Endothelial cell of umbilical vein (primary cell): ENCODE measurements at regions of chr10 and their contacts with region 1.

Region 1: DNA sequence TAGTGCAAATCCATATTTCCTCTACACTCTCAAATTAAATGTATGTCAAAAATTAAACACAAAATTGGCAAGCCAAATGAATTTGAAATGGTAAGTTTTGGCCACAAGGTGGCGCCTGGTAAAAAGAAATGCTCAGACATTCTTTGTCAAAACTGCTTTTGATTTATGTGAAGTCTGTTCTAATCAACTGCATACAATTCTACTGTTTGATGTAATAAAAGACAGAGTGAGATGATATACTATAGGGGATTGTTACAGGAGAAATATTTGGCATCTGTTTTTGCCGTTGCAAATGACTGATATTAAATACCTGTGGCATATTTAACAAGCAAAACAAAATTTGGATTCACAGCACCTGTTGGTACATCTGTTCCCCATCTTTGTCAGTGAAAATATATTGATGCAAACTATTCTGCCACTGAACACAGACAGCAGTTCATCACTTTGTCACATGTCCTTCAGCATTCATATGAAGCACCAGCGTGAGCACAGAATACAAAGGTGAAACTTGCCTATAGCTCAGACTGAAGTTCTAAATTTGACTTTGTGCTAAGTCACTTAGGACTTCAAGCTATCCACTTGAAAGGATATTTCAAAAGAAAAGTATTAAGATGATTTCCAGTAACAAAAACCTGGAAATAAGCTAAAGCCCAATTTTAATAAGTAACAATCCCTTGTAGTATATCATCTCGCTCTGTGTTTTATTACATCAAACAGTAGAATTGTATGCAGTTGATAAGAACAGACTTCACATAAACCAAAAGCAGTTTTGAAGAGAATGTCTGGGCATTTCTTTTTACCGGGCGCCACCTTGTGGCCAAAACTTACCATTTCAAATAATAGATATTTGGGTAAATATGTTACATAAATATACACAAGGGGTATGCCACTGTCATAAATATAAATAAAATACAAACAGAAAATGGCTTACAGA is 10.2 kb upstream of the CH25H start:
- DNase-seq: peak; percentile 80
- H3K4me3 ChIP-seq: no peak overlapping the region
- H3K27ac ChIP-seq: no peak overlapping the region
- H3K4me1 ChIP-seq: peaks cover 9% of the 10 kb centered on the region
- H3K27me3 ChIP-seq: no peaks in the 10 kb centered on the region
- CTCF ChIP-seq: peak; percentile 47 to 51
- POLR2A ChIP-seq: no peak

Region 2: GRCh38 chr10:88835096-88835909 is 382.0 kb before region 1 on chr10:
- CTCF ChIA-PET with region 1: interaction called, 41 read pairs
- POLR2A ChIA-PET with region 1: no interaction called
- dilution Hi-C with region 1: no loop called
- intact Hi-C with region 1: loop called (anchors 1 kb)
- DNase-seq: peak; percentile 85
- H3K4me3 ChIP-seq: no peak overlapping the region
- H3K27ac ChIP-seq: no peak overlapping the region
- H3K4me1 ChIP-seq: no peaks in the 10 kb centered on the region
- H3K27me3 ChIP-seq: peaks cover 0 to 2% of the 10 kb centered on the region in 2 experiments
- CTCF ChIP-seq: peak; percentile 83 to 88
- POLR2A ChIP-seq: no peak

Region 3: DNA sequence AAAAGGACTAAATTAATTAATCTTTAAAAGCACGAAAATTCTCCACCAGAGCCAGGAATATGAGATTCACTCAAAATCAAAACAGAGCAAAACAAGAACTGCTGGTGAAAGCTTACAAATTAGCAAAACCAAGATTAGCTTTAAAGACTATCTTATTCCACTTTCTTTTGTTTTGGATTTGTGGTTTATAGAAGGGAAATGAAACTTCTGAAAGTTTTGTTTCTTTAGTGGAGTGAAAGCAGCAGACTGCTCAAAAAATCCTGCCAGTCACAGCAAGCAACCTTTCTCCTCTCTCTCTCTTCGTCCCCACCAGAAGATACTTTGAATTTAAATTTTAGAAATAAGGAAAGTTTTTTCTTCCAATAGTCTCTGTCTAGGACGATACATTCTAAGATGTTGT is 272.5 kb before region 1 on chr10:
- CTCF ChIA-PET with region 1: interaction called, 17 read pairs
- POLR2A ChIA-PET with region 1: no interaction called
- dilution Hi-C with region 1: no loop called
- intact Hi-C with region 1: no loop called
- DNase-seq: no peak
- H3K4me3 ChIP-seq: no peak overlapping the region
- H3K27ac ChIP-seq: no peak overlapping the region
- H3K4me1 ChIP-seq: no peaks in the 10 kb centered on the region
- H3K27me3 ChIP-seq: peaks cover 0 to 4% of the 10 kb centered on the region in 2 experiments
- CTCF ChIP-seq: no peak
- POLR2A ChIP-seq: no peak

Region 4: DNA sequence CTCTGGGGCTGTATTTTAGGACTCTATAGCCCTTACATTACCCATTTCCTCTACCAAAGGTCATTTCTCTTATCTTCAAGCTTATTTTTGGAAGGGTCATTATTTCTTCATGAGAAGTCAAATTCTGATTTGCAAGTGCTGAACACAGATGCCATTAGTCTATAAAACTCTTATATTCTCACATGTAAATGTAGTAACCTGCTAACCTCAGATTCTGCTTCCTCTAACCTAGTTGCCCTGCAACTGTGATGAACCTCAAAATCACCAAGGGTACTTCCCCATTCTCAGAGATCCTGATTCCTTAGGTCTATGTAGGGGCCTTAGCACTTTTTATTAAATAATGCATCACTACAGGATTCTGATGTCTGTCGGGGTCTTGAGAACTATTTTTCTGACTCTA is 220.4 kb before region 1 on chr10:
- CTCF ChIA-PET with region 1: interaction called, 14 read pairs
- POLR2A ChIA-PET with region 1: no interaction called
- dilution Hi-C with region 1: loop called (anchors 25 kb)
- intact Hi-C with region 1: no loop called
- DNase-seq: no peak
- H3K4me3 ChIP-seq: no peak overlapping the region
- H3K27ac ChIP-seq: no peak overlapping the region
- H3K4me1 ChIP-seq: peaks cover 3% of the 10 kb centered on the region
- H3K27me3 ChIP-seq: peaks cover 6 to 12% of the 10 kb centered on the region in 2 experiments
- CTCF ChIP-seq: no peak
- POLR2A ChIP-seq: no peak

Region 5: DNA sequence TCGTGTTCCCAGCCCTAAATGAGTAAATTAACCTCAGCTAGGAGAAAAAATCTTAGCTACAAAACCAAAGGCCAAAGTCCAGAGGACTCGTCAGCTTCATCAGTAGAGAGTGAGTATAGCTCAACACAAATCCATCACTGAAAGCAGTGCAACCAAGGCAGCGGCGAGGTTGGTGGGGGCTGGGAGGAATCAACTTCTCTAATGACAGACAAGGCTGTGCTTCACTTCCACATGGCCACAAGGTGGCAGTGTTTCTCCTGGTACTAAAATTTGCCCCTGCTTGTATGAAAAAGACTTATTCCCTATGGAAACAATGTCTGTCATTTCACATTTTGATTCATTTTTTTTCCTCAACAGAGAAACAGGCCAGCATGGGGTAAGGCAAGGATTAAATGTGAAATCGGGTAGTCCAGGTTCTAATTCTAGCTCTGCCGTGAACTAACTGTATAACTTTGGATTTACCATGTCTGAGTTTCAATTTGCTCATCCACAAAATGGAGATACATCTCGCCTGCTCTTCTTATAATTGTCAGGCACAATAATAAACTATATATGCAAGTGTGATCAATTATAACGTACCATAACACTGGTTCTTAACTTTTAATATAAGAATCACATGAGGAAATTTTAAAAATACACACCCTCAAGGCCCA is 187.4 kb before region 1 on chr10:
- CTCF ChIA-PET with region 1: interaction called, 74 read pairs
- POLR2A ChIA-PET with region 1: no interaction called
- dilution Hi-C with region 1: no loop called
- intact Hi-C with region 1: loop called (anchors 1 kb)
- DNase-seq: peak; percentile 79
- H3K4me3 ChIP-seq: no peak overlapping the region
- H3K27ac ChIP-seq: no peak overlapping the region
- H3K4me1 ChIP-seq: peaks cover 19% of the 10 kb centered on the region
- H3K27me3 ChIP-seq: peaks cover 0 to 2% of the 10 kb centered on the region in 2 experiments
- CTCF ChIP-seq: peak; percentile 66 to 84
- POLR2A ChIP-seq: no peak

Region 6: DNA sequence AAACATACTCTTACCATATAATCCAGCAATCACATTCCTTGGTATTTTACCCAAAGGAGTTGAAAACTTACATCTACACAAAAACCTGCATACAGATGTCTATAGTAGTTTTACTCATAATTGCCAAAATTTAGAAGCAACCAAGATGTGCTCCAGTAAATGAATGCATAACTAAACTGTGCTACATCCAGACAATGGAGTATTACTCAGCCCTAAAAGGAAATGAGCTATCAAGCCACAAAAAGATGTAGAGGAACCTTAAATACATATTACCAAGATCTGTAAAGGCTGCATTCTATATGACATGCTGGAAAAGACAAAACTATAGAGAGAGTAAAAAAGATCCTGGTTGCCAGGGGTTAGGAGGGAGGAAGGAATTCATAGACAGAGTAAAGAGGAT is 11.6 kb after region 1 on chr10:
- CTCF ChIA-PET with region 1: interaction called, 15 read pairs
- POLR2A ChIA-PET with region 1: no interaction called
- dilution Hi-C with region 1: no loop called
- intact Hi-C with region 1: no loop called
- DNase-seq: no peak
- H3K4me3 ChIP-seq: no peak overlapping the region
- H3K27ac ChIP-seq: no peak overlapping the region
- H3K4me1 ChIP-seq: peaks cover 10% of the 10 kb centered on the region
- H3K27me3 ChIP-seq: no peaks in the 10 kb centered on the region
- CTCF ChIP-seq: no peak
- POLR2A ChIP-seq: no peak

Region 7: DNA sequence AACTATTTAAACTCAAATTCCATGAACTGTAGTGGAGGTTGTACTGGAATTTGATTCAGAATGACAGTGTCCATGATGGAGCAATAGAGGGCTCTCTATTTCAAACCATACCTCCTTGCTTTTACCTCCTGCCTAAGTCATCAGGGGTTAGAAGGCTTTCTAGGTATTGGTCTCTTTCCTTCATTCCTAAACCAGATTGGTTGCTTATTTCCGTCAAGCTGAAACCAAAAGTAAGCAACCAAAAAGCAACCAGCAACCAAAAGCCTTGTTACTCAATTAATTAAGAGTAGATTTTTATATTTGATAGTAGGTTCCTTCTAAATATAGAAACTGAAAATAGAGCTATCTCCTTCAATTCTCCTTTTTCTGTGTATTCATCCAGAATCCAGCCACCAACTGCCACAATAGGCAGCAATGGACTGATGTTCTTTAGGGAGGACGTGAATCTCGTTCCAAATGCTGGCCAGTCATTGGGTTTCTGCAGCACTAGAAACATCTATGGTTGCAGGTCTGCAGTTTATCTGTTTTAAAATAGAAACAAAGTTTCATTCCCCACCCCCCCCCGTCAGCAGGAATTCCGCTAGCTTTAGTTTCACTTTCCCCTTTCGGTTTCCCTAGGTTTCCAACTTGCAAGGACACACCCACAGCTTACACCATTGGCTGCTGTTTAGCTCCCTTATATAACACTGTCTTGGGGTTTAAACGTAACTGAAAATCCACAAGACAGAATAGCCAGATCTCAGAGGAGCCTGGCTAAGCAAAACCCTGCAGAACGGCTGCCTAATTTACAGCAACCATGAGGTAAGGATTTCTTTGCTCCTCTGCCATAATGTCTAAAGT is 174.8 kb after region 1 on chr10 and contains the start of gene IFIT1:
- CTCF ChIA-PET with region 1: interaction called, 8 read pairs
- POLR2A ChIA-PET with region 1: no interaction called
- dilution Hi-C with region 1: no loop called
- intact Hi-C with region 1: loop called (anchors 1 kb)
- DNase-seq: peak; percentile 76
- H3K4me3 ChIP-seq: peak within 1 kb of the TSS; percentile 52 to 100 (median 98)
- H3K27ac ChIP-seq: peak within 1 kb of the TSS; percentile 63
- H3K4me1 ChIP-seq: peaks cover 10% of the 10 kb centered on the region
- H3K27me3 ChIP-seq: no peaks in the 10 kb centered on the region
- CTCF ChIP-seq: no peak
- POLR2A ChIP-seq: no peak
- total RNA-seq, gene IFIT1: 0.39 and 0.75 TPM in 2 replicates